Activated CD8-positive, alpha-beta T cell treated with anti-CD3 and anti-CD28 coated beads, Interleukin-2, amount 10 ng/mL, durations not matched to agents 7 days and 5 days (primary cell): ENCODE measurements at regions of chr11 and their contacts with region 1.

Region 1: GRCh38 chr11:6646918-6647679 is 8.5 kb downstream of the DCHS1 start:
- DNase-seq: peak; percentile 42
- ATAC-seq: peak; percentile 75
- H3K4me3 Mint-ChIP-seq: no peak overlapping the region
- H3K27ac Mint-ChIP-seq: no peak overlapping the region
- H3K4me1 Mint-ChIP-seq: no peaks in the 10 kb centered on the region
- H3K27me3 Mint-ChIP-seq: no peaks in the 10 kb centered on the region

Region 2: DNA sequence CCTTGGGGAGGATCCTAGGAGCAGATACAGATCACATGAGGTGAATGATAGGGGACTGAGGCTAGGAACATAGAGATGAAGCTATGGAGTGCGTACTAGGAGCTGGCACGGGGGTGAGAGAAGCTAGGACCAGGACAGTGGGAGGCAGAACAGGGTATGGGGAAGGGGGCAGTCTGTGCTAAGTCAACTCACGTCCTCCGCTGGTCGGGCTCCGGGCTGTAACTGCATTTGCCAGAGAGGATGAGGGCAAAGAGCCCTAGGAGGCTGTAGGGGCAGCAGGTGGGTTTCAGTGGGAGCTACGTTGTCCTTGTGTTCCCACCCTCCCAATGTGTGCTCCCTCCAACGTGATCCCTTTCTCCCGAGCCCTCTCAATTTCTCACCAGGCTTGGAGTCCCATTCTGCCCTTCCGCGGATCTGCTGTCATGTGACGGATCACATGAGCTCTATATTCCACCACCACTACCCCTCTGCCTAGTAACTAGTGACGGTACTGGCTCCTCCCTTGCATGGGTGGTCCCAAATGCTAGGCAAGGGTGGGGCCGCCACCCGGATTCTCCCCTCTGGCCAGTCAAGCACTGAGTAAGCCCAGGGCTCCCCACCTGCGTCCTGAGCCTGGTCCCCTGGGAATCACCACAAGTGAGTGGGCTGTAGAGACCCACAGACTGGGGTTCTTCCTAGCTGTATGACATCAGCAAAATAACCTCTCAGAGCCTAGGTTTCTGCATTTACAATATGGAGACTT is 27.9 kb before region 1 on chr11 and contains the start of gene TPP1:
- CTCF ChIA-PET with region 1: interaction called, 22 read pairs
- POLR2A ChIA-PET with region 1: interaction called, 10 read pairs
- DNase-seq: peak; percentile 95
- ATAC-seq: peak; percentile 96
- H3K4me3 Mint-ChIP-seq: no peak within 1 kb of the TSS
- H3K27ac Mint-ChIP-seq: no peak within 1 kb of the TSS
- H3K4me1 Mint-ChIP-seq: peaks cover 2% of the 10 kb centered on the region
- H3K27me3 Mint-ChIP-seq: no peaks in the 10 kb centered on the region
- total RNA-seq, gene TPP1: 74.1 to 78.9 TPM

Region 3: GRCh38 chr11:6658647-6659046 is 11.5 kb after region 1 on chr11:
- CTCF ChIA-PET with region 1: interaction called, 11 read pairs
- POLR2A ChIA-PET with region 1: no interaction called
- DNase-seq: no peak
- ATAC-seq: no peak
- H3K4me3 Mint-ChIP-seq: no peak overlapping the region
- H3K27ac Mint-ChIP-seq: no peak overlapping the region
- H3K4me1 Mint-ChIP-seq: peaks cover 10% of the 10 kb centered on the region
- H3K27me3 Mint-ChIP-seq: peaks cover 20% of the 10 kb centered on the region